ENCODE measurements at regions of chr14 and their contacts with region 1.

Region 1: DNA sequence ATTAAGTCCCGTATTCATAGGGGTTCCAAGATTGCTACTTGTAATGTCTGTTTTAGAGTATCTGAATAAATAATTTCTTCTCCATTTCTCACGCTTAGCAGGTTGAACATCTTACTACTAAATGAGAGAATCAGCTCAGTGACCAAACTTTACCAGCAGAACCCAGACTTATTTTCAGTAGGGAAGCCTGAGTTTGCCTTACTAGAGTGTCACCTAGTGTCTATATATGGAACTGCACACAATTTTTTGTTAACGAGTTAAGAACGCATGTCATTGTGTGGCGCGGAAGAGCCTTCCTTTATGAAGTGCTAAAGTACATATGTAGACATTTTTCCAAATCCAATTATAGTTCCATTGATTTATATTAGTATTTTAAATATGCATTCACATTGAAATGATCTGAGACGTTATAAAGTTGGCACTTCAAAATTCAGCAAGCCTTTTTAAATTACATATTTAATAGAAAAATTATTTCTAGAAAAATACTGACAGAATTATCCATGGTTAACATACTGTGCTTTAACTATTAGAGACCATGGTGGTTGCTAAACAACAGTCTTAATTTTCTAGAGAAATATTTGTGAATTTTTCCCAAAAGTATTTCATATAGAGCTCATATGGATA is 88.3 kb downstream of the RPS29 start:
- DNase-seq: no peak
- ATAC-seq: peak; percentile 65
- H3K4me3 Mint-ChIP-seq: no peak overlapping the region
- H3K27ac Mint-ChIP-seq: no peak overlapping the region
- H3K4me1 Mint-ChIP-seq: no peaks in the 10 kb centered on the region
- H3K27me3 Mint-ChIP-seq: peaks cover 18% of the 10 kb centered on the region
- CTCF ChIP-seq: peak; percentile 50

Region 2: DNA sequence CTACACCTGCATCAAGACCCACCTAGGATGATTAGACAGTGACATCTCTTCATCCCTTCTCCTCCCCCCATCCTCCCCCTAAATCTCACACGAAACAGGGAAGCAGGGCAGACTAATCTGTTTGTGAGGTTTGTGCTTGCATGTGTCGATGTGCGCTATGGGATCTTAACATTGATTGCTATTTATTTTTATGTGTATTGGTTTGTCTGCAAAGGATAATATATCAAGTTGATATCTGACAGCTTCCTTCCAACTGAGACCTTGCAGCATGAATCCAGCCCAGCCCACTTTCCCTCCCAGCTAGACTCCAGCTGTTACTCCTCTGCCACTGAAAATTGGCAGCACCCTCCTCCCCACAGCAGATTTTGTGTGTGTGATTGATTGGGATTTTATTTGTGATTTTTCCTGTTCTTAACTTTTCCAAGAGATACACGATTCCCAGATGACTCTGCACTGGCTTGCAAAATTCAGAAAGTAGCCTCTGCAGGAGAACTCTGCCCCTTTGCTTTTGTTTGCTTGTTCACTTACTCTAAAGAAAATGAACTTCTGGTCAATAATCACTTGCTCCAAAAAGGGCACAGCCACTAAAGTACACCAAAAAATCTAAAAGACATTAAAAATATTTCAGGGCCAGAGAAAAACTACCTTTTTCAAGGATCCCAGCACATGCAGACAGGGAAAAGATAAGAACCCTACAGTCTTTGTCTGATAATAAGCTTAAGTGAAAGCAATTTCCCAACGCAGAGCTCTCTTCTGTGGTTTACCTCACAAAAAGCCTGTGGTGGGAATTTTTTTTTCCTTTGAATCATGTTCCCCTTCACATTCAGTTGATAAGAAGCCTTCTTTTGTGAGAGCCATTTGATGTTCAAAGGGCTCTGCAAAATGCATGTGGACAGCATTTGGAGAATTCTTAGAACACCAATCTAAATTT is 133.8 kb before region 1 on chr14:
- CTCF ChIA-PET with region 1: no interaction called
- POLR2A ChIA-PET with region 1: no interaction called
- intact Hi-C with region 1: no loop called
- DNase-seq: no peak
- ATAC-seq: no peak
- H3K4me3 Mint-ChIP-seq: no peak overlapping the region
- H3K27ac Mint-ChIP-seq: no peak overlapping the region
- H3K4me1 Mint-ChIP-seq: no peaks in the 10 kb centered on the region
- H3K27me3 Mint-ChIP-seq: peaks cover 2% of the 10 kb centered on the region
- CTCF ChIP-seq: no peak

Region 3: DNA sequence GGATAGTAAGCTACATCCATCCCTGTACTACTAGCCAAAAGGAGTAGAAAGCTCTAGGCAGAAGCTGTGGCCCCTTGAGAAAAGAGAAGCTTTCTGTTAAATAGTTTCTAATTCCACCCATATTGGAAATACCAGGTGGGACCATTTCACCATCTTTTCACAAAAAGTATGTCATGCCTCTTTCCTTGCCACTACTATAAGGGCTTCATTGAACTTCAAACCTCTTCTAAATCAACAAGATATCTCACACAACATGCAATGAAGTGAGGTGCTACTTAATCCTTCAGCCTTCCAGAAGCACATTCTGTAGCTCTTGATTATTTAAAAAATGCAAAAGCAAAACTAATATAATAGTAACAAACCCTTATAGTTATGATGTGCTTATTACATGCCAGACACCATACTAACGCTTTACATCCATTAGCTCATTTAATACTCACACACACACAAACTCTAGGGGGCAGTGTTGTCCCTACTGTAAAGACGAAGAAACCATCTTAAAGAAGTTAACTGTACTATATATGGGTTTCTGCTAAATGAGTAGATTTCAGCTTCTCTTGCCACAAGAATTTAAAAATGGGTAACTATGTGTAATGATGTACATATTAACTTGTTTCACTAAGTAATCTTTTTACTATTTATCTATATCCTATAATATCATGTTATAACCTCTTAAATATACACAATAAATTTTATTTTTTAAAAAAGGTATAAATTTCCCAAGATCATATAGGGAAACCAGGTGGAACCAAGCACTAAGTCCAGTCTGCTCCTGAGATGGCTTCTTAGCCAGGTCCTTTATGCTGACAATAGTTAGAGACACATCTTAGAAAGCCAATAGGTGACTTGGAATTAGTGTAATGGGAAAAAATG is 36.1 kb before region 1 on chr14:
- CTCF ChIA-PET with region 1: interaction called, 23 read pairs
- POLR2A ChIA-PET with region 1: no interaction called
- intact Hi-C with region 1: loop called (anchors 1 kb)
- DNase-seq: no peak
- ATAC-seq: peak; percentile 81
- H3K4me3 Mint-ChIP-seq: no peak overlapping the region
- H3K27ac Mint-ChIP-seq: no peak overlapping the region
- H3K4me1 Mint-ChIP-seq: no peaks in the 10 kb centered on the region
- H3K27me3 Mint-ChIP-seq: peaks cover 5% of the 10 kb centered on the region
- CTCF ChIP-seq: peak; percentile 62

Region 4: DNA sequence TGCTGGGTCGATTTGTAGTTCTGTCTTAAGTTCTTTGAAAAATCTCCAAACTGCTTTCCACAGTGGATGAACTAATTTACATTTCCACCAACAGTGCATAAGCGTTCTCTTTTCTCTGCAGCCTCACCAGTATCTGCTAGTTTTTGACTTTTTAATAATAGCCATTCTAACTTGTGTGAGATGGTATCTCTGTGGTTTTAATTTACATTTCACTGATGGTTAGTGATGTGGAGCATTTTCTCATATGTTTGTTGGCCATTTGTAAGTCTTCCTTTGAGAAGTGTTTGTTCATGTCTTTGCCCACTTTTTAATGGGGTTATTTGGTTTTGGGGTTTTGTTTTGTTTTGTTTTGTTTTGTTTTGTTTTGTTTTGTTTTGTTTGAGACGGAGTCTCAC is 62.5 kb after region 1 on chr14:
- CTCF ChIA-PET with region 1: no interaction called
- POLR2A ChIA-PET with region 1: no interaction called
- intact Hi-C with region 1: no loop called
- DNase-seq: no peak
- ATAC-seq: no peak
- H3K4me3 Mint-ChIP-seq: no peak overlapping the region
- H3K27ac Mint-ChIP-seq: no peak overlapping the region
- H3K4me1 Mint-ChIP-seq: peaks cover 5% of the 10 kb centered on the region
- H3K27me3 Mint-ChIP-seq: no peaks in the 10 kb centered on the region
- CTCF ChIP-seq: no peak